ENCODE measurements at regions of chr13 and their contacts with region 1.

Region 1: GRCh38 chr13:65217471-65217995 is 2012.6 kb downstream of the PCDH9 start:
- DNase-seq: no peak
- ATAC-seq: no peak
- H3K4me3 ChIP-seq: no peak overlapping the region
- H3K27ac ChIP-seq: no peak overlapping the region
- H3K4me1 ChIP-seq: no peaks in the 10 kb centered on the region
- H3K27me3 ChIP-seq: no peaks in the 10 kb centered on the region
- CTCF ChIP-seq: no peak
- EP300 ChIP-seq: no peak
- POLR2A ChIP-seq: no peak
- RAD21 ChIP-seq: no peak

Region 2: GRCh38 chr13:64529874-64530485 is 687.6 kb before region 1 on chr13:
- CTCF ChIA-PET with region 1: no interaction called
- POLR2A ChIA-PET with region 1: no interaction called
- RAD21 ChIA-PET with region 1: no interaction called
- SMC1A ChIA-PET with region 1: no interaction called
- in situ Hi-C with region 1: no loop called
- intact Hi-C with region 1: loop called (anchors 10 kb)
- DNase-seq: no peak
- ATAC-seq: no peak
- H3K4me3 ChIP-seq: no peak overlapping the region
- H3K27ac ChIP-seq: no peak overlapping the region
- H3K4me1 ChIP-seq: no peaks in the 10 kb centered on the region
- H3K27me3 ChIP-seq: no peaks in the 10 kb centered on the region
- CTCF ChIP-seq: peak; percentile 40 to 62 (median 50)
- EP300 ChIP-seq: no peak
- POLR2A ChIP-seq: no peak
- RAD21 ChIP-seq: 0 out of 2 replicates have a peak, but pooled peaks have one; percentile 5

Region 3: GRCh38 chr13:65095161-65096082 is 122.1 kb before region 1 on chr13:
- CTCF ChIA-PET with region 1: no interaction called
- POLR2A ChIA-PET with region 1: no interaction called
- RAD21 ChIA-PET with region 1: no interaction called
- SMC1A ChIA-PET with region 1: no interaction called
- in situ Hi-C with region 1: no loop called
- intact Hi-C with region 1: no loop called
- DNase-seq: no peak
- ATAC-seq: no peak
- H3K4me3 ChIP-seq: no peak overlapping the region
- H3K27ac ChIP-seq: no peak overlapping the region
- H3K4me1 ChIP-seq: no peaks in the 10 kb centered on the region
- H3K27me3 ChIP-seq: no peaks in the 10 kb centered on the region
- CTCF ChIP-seq: no peak
- EP300 ChIP-seq: no peak
- POLR2A ChIP-seq: no peak
- RAD21 ChIP-seq: no peak

Measured in GM12878 (cell line).